Activated CD4-positive, alpha-beta T cell treated with anti-CD3 and anti-CD28 coated beads for 36 hours (primary cell): ENCODE measurements at regions of chr1 and their contacts with region 1.

Region 1: DNA sequence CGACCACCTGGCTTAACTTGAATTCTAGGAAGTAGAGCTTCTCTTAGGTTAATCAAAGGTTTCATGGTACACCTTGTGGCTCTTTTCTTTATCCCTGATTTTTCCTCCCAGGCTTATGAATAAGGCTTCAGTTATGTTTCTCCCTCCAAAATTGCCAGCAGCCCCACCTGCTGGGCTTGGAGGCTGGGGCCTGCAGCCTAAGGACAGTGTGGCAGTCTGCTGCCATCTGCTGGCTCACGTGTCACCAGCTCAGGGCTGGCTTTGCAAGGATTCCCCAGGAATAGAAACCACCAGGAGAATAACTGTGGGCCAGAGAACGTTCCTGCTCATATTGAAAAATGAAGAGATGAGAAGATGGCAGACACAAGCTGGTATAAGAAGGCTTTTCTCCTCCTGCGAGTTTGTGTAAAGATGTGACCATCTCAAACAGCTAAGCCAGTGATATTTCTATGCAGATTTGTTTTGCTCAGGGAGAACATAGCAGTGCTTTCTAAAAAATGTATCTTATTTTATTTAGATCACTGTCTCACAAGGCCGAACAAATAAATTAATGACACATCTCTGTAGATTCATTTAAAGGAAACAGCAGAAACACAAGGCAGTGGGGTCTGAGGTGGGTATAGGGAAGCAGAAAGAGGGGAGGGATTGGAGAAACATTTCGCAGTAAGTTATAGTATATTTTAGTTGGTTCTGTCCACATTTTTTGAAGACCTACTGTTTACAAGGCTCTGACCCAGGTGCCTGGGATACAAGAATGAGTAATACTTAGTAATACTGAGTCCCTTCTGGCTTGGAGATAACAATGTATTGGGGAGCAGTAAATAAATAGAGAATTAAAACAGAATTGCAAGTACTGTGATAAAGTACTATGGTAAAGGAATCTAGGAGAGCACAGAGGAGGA is 291.1 kb upstream of the SGIP1 start:
- DNase-seq: peak; percentile 89
- ATAC-seq: peak; percentile 41
- H3K4me3 Mint-ChIP-seq: no peak overlapping the region
- H3K27ac Mint-ChIP-seq: no peak overlapping the region
- H3K4me1 Mint-ChIP-seq: no peaks in the 10 kb centered on the region
- H3K27me3 Mint-ChIP-seq: peaks cover 5% of the 10 kb centered on the region

Region 2: GRCh38 chr1:65393347-65393746 is 849.5 kb before region 1 on chr1:
- CTCF ChIA-PET with region 1: no interaction called
- POLR2A ChIA-PET with region 1: no interaction called
- intact Hi-C with region 1: loop called in 1 of 2 experiments (anchors 10 kb)
- DNase-seq: peak; percentile 45
- ATAC-seq: peak; percentile 87
- H3K4me3 Mint-ChIP-seq: no peak overlapping the region
- H3K27ac Mint-ChIP-seq: peak overlapping the region; percentile 28
- H3K4me1 Mint-ChIP-seq: peaks cover 57% of the 10 kb centered on the region
- H3K27me3 Mint-ChIP-seq: no peaks in the 10 kb centered on the region

Region 3: GRCh38 chr1:65958561-65959350 is 284.1 kb before region 1 on chr1:
- CTCF ChIA-PET with region 1: interaction called, 107 read pairs
- POLR2A ChIA-PET with region 1: no interaction called
- intact Hi-C with region 1: loop called (anchors 1 kb)
- DNase-seq: peak; percentile 23
- ATAC-seq: peak; percentile 70
- H3K4me3 Mint-ChIP-seq: no peak overlapping the region
- H3K27ac Mint-ChIP-seq: no peak overlapping the region
- H3K4me1 Mint-ChIP-seq: no peaks in the 10 kb centered on the region
- H3K27me3 Mint-ChIP-seq: no peaks in the 10 kb centered on the region

Region 4: DNA sequence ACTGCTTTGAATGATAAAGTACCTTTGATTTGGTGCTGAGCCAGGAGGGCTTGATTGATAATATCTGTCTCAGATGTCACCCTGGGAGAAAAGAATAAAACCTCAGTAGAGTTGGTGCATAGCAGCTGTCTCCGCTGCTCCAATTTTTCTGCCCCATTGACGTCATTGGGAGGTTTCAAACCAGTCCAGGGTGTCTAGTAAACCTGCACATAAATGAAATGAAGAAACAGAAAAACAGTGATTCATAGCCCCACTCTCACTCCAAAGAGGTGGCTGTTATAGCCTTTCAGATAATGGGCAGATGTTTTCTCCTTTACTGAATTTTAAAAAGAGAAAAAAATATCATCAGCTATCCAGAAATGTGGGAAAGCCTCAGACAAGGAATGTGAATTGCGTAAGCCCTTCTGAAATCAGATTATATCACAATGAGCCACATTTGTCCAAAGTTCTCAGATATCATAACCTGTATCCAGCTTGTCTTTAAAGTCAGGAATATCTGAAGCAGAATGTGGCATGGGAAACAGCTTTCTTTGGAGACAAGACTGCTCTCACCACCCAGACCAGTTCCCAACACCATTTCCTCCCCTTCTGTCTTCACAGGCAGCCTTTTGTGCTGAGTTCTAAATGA is 60.2 kb before region 1 on chr1:
- CTCF ChIA-PET with region 1: interaction called, 24 read pairs
- POLR2A ChIA-PET with region 1: no interaction called
- intact Hi-C with region 1: loop called in 1 of 2 experiments (anchors 5 kb)
- DNase-seq: peak; percentile 71
- ATAC-seq: peak; percentile 98
- H3K4me3 Mint-ChIP-seq: no peak overlapping the region
- H3K27ac Mint-ChIP-seq: no peak overlapping the region
- H3K4me1 Mint-ChIP-seq: peaks cover 32% of the 10 kb centered on the region
- H3K27me3 Mint-ChIP-seq: peaks cover 3% of the 10 kb centered on the region

Region 5: GRCh38 chr1:66271216-66271903 is 28.5 kb after region 1 on chr1:
- CTCF ChIA-PET with region 1: interaction called, 13 read pairs
- POLR2A ChIA-PET with region 1: interaction called, 4 read pairs
- intact Hi-C with region 1: no loop called
- DNase-seq: peak; percentile 78
- ATAC-seq: peak; percentile 65
- H3K4me3 Mint-ChIP-seq: peak overlapping the region; percentile 47
- H3K27ac Mint-ChIP-seq: peak overlapping the region; percentile 90
- H3K4me1 Mint-ChIP-seq: peaks cover 76% of the 10 kb centered on the region
- H3K27me3 Mint-ChIP-seq: no peaks in the 10 kb centered on the region

Region 6: GRCh38 chr1:66350001-66350547 is 107.2 kb after region 1 on chr1:
- CTCF ChIA-PET with region 1: interaction called, 21 read pairs
- POLR2A ChIA-PET with region 1: interaction called, 7 read pairs
- intact Hi-C with region 1: loop called (anchors 1 kb)
- DNase-seq: peak; percentile 78
- ATAC-seq: peak; percentile 59
- H3K4me3 Mint-ChIP-seq: peak overlapping the region; percentile 57
- H3K27ac Mint-ChIP-seq: peak overlapping the region; percentile 88
- H3K4me1 Mint-ChIP-seq: peaks cover 93% of the 10 kb centered on the region
- H3K27me3 Mint-ChIP-seq: no peaks in the 10 kb centered on the region

Region 7: DNA sequence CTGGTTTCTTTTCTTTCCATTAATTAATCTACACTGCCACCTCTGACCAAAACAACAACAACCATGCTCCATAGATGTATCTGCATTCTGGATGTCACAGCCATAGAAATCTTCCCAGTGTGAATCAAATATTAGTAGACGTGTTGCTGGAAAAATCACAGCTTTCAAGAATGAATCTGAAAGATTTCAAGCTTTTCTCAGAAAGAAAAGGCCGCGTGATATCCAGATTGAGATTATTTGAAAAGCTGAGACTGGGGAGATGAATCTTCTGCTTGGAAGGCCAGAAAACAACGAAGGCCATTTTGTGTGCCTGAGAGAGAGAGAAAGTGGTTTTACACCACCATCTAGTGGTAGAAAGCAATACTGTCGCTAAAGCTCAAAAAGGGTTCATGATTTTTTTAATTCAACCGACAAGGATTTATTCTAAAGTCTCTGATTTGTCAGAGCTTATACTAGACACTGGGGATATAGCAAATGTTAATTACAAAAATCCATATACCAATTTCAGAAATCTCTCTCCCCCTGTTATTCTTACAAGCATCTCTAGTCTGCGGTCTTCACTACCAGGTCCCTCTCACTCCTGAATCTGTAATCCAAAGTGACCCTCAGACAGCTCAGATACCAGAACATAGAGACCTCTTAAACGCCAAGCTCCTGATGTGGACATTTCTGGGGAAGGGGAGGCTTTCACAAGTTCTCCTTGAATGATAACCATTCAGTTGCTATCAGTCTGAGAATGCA is 203.5 kb after region 1 on chr1:
- CTCF ChIA-PET with region 1: interaction called, 359 read pairs
- POLR2A ChIA-PET with region 1: interaction called, 4 read pairs
- intact Hi-C with region 1: loop called (anchors 1 kb)
- DNase-seq: peak; percentile 45
- ATAC-seq: peak; percentile 60
- H3K4me3 Mint-ChIP-seq: peak overlapping the region; percentile 64
- H3K27ac Mint-ChIP-seq: peak overlapping the region; percentile 97
- H3K4me1 Mint-ChIP-seq: peaks cover 33% of the 10 kb centered on the region
- H3K27me3 Mint-ChIP-seq: peaks cover 7% of the 10 kb centered on the region